ENCODE measurements at regions of chr12 and their contacts with region 1.

Region 1: DNA sequence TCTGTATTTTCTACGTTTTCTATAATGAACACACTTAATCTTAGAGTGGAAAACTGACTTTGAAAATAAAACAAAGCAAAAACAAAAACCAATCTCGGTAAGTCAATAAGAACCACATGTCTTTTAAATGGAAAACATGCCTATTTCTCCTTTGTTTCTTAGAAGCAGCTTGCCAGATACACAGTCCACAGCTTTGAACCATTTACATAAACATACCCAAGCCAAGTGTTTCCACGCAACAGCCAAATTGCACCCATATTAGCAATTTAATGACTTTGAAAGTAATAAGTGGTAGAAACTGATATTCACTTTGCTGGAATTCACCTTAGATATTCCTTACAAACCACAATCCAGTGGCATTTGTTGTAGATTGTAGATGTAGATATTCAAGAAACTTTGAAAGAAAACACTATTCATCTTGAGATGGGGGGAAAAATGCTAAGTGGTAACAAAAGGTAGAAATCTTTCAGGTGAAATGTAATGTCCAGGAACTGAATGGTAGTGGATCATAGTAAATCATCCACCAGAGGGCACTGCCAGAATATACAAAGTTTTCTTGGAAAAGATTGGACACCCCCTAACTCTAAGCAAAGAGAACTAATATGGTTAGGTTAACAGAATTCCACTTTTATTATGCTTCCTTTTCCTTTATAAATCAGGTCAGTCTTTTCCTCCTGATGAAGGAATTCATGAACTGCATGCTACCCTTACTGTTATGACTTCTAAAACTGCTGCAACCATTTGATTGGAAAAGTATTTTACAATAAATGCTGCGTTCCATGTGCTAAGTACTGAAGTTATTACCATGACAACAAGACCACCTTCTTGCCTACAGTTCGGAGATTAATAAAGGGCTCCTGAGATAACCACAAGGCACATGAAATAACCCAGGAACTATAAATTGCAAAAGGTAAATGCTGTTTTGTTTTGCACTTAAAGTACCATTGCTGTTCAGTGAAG is 69.8 kb downstream of the RERG start:
- DNase-seq: no peak
- H3K4me3 ChIP-seq: peak overlapping the region in 1 of 59 donors; percentile 11
- H3K27ac ChIP-seq: peak overlapping the region in 8 of 59 donors; percentile 5 to 52 (median 22)
- H3K27me3 ChIP-seq: peaks cover 0 to 6% (median 0%) of the 10 kb centered on the region in 45 donors
- CTCF ChIP-seq: peak; percentile 53 to 88 (median 71)

Region 2: GRCh38 chr12:14845350-14845750 is 306.1 kb before region 1 on chr12:
- intact Hi-C with region 1: loop called in 1 of 2 experiments (anchors 10 kb)
- DNase-seq: peak in 2 of 10 donors; percentile 38 to 50
- H3K4me3 ChIP-seq: no peak overlapping the region
- H3K27ac ChIP-seq: no peak overlapping the region
- H3K27me3 ChIP-seq: no peaks in the 10 kb centered on the region
- CTCF ChIP-seq: peak; percentile 39 to 87 (median 75)

Region 3: DNA sequence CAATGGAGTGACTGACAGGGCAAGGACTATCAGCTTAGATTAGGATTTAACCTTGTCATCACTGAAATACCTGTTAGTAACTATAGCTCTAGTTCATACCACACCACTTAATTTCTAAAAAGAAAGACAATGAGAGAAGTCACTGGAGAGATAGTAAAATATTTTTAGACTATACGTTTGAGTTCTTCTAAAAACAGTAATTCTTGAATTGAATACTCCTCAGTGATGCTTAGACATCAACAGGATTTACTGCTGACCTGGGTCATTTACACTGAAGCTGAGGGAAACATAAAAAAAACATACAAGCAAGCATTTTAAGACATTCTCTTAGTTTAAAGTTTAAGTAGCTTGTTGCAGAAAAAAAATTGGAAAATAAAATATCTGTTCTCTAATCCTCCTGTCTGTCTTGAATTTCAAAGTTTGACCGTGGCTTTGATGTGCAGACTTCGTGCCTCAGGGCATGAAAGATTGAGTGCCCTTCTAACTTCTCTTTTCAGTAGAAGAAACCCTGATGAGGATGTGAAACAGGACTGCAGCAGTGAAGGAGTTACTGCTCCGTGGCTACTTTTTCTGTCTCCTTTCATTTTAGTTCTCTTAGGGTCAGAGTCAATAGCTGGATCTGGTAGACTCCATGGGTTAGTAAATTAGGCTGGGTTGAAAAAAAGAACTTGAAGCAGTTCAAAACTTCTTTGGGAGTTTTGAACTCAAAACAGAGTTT is 343.0 kb after region 1 on chr12:
- intact Hi-C with region 1: no loop called
- DNase-seq: no peak
- H3K4me3 ChIP-seq: no peak overlapping the region
- H3K27ac ChIP-seq: no peak overlapping the region
- H3K27me3 ChIP-seq: no peaks in the 10 kb centered on the region
- CTCF ChIP-seq: no peak

Measured in dorsolateral prefrontal cortex (tissue), 120 donors.